ENCODE measurements at regions of chr3 and their contacts with region 1.

Region 1: DNA sequence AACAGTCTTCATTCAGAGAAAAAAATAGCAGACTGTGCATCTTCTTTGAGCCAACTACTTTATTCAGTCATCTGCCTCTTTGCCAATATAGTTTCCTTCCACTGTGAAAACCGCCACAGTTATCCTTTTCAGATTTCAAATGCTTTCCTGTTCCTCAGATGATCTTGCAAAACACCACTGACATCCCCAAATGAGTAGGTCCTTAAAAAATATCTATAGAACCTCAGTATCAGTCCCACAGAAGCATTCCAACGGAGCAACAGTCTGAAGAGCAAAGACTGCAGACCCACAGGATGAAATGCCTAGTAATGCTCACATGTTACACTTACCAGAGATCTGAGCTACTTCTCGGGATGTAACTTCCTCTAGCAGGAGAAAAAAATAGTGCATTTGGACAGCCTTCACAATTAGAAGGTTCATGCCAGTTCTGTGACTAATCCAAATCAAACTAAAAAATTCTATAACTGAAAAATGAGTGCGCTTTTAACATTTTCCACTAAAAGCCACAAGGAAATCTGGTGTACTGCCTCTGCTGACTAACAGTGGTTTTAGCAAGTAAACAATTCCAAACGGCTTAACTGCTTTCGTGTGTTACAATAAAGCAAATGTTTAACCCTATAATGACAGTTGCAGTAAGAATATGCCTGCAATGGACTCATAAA is at the start of gene ANKRD28:
- DNase-seq: peak; percentile 80
- H3K4me3 Mint-ChIP-seq: peak within 1 kb of the TSS; percentile 86
- H3K27ac Mint-ChIP-seq: peak within 1 kb of the TSS; percentile 98
- H3K4me1 Mint-ChIP-seq: peaks cover 63% of the 10 kb centered on the region
- H3K27me3 Mint-ChIP-seq: no peaks in the 10 kb centered on the region
- total RNA-seq, gene ANKRD28: 38.1 and 38.7 TPM in 2 replicates

Region 2: DNA sequence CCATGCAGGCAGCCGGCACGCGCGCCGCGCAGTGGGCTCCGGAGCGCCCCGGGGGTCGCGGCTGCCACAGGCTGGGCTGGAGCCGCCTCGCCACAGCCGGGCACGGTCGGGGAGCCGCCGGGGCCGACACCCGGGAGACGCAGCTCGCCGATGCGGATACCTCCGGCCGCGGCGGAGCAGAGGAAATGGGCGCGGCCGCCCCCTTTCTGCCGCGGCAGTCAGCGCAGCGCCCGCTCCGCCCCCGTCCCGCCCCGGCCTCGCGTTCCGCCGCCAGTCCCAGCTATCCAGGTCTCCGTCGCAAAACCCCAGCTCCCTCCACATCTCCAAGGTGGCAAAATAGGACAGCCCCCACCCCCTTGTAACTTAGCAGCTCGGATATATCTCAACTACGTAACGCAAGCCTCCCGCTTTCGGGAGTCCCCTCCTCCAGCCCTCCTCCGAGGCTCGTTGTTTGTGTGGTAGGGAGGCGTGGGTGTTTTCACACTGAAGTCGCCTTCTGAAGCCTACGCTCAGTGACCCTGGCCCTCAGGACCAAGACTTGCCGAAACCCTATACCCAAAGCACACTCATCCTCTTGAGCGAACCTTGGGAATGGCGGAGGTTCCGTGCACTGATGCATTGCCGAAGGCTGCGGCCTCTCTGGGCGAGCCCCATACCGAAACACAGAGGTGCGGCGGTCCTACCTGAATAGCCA is 465.2 kb before region 1 on chr3 and contains the start of gene SH3BP5:
- intact Hi-C with region 1: no loop called
- DNase-seq: peak; percentile 94
- H3K4me3 Mint-ChIP-seq: peak within 1 kb of the TSS; percentile 92
- H3K27ac Mint-ChIP-seq: peak within 1 kb of the TSS; percentile 89
- H3K4me1 Mint-ChIP-seq: peaks cover 48% of the 10 kb centered on the region
- H3K27me3 Mint-ChIP-seq: peaks cover 2% of the 10 kb centered on the region
- total RNA-seq, gene SH3BP5: 19.5 and 19.8 TPM in 2 replicates

Region 3: GRCh38 chr3:15629860-15630597 is 167.7 kb before region 1 on chr3:
- intact Hi-C with region 1: loop called (anchors 1 kb)
- DNase-seq: peak; percentile 92
- H3K4me3 Mint-ChIP-seq: peak overlapping the region; percentile 53
- H3K27ac Mint-ChIP-seq: peak overlapping the region; percentile 67
- H3K4me1 Mint-ChIP-seq: peaks cover 28% of the 10 kb centered on the region
- H3K27me3 Mint-ChIP-seq: no peaks in the 10 kb centered on the region

Region 4: GRCh38 chr3:15647611-15648167 is 150.1 kb before region 1 on chr3:
- intact Hi-C with region 1: loop called (anchors 1 kb)
- DNase-seq: peak; percentile 92
- H3K4me3 Mint-ChIP-seq: peak overlapping the region; percentile 69
- H3K27ac Mint-ChIP-seq: peak overlapping the region; percentile 38
- H3K4me1 Mint-ChIP-seq: peaks cover 38% of the 10 kb centered on the region
- H3K27me3 Mint-ChIP-seq: peaks cover 21% of the 10 kb centered on the region

Region 5: DNA sequence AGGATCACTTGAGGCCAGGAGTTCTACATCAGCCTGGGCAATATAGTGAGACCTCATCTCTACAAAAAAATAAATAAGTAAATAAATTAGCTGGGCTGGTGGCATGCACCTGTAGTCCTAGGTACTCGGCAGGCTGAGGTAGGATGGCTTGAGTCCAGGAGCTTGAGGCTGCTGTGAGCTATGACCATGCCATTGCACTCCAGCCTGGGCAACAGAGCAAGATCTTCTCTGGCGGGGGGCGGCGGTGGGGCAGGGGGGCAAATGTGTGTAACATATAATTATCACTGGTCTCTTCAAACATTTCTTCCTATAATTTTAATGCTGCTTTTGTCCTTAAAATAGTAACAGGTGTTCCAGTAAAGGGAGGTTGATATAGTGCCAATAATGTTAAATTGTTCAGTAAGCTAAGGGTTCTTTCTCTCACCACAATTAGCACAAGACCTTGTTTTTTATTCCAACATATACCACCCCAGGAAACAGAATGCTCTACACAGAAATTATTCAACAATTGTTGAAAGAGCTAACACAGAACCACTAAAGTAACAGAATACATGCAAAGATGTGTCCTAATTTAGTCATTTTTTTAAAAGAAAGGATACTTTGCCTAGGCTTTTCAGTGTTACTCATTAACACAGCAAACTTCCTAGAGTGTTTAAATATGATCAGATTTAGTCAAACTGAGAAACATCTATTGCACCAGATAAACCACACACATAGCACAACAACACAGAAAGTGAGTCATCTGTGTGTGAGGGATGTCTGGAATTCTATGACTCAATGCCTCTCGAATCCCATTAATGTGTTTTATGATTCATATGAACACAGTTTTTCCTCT is 29.1 kb before region 1 on chr3:
- intact Hi-C with region 1: loop called (anchors 1 kb)
- DNase-seq: no peak
- H3K4me3 Mint-ChIP-seq: peak overlapping the region; percentile 24
- H3K27ac Mint-ChIP-seq: peak overlapping the region; percentile 66
- H3K4me1 Mint-ChIP-seq: peaks cover 27% of the 10 kb centered on the region
- H3K27me3 Mint-ChIP-seq: no peaks in the 10 kb centered on the region

Region 6: GRCh38 chr3:15783361-15783969 is 14.3 kb before region 1 on chr3:
- intact Hi-C with region 1: no loop called
- DNase-seq: no peak
- H3K4me3 Mint-ChIP-seq: no peak overlapping the region
- H3K27ac Mint-ChIP-seq: no peak overlapping the region
- H3K4me1 Mint-ChIP-seq: peaks cover 13% of the 10 kb centered on the region
- H3K27me3 Mint-ChIP-seq: no peaks in the 10 kb centered on the region

Region 7: DNA sequence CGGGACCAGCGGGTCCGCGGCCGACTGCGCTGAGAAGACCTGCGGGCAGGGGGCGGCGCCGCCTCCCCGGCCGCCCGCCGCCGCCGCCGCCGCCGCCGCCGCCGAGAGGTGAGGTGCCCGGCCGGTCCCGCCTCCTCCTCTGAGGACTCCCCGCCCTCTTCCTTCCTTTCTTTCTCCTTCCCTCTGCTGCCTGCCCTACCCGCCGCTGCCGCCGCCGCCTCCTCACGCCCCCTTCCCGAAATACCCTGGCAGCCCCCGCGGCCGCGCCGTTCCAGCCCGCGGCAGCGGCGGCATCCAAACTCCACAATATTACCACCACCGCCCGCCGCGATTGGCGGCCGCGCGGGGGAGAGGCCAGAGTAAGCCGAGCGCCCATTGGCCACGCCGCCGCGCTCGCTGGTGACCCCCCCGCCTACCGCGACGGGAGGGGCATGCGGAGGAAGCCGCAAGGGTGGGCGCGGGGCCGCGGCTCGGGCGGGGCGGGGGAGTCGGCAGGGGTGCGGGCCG is 61.8 kb after region 1 on chr3:
- intact Hi-C with region 1: loop called (anchors 2 kb)
- DNase-seq: peak; percentile 94
- H3K4me3 Mint-ChIP-seq: peak overlapping the region; percentile 92
- H3K27ac Mint-ChIP-seq: peak overlapping the region; percentile 96
- H3K4me1 Mint-ChIP-seq: peaks cover 25% of the 10 kb centered on the region
- H3K27me3 Mint-ChIP-seq: peaks cover 9% of the 10 kb centered on the region